Activated CD8-positive, alpha-beta memory T cell treated with anti-CD3 and anti-CD28 coated beads, Interleukin-2, amount 10 ng/mL, durations not matched to agents 7 days and 5 days (primary cell): ENCODE measurements at regions of chr17 and their contacts with region 1.

Region 1: GRCh38 chr17:74961657-74962490 is 10.7 kb downstream of the HID1 start:
- DNase-seq: peak; percentile 87
- ATAC-seq: peak; percentile 82
- H3K4me3 Mint-ChIP-seq: no peak overlapping the region
- H3K27ac Mint-ChIP-seq: no peak overlapping the region
- H3K4me1 Mint-ChIP-seq: peaks cover 7% of the 10 kb centered on the region
- H3K27me3 Mint-ChIP-seq: no peaks in the 10 kb centered on the region

Region 2: DNA sequence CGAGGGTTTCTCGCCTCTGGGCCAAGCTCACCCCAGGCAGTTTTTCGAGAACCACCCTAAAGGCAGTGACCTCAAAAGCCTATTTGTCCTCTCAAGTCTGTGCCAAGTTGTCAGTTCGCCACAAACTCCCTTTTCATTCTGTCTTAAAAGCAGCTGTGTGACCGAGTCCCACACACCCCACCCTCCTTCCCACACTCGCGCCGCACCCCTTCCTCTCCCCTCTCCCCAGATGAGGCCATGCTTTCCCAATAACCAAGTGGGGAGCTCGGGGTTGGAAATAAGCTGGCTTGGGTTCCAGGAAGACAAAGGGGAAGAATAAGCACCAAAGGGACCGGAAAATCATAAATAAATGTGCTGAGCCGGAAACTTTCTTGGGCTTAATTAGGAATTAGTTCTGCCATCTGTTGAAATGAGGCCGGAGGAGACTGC is 138.9 kb before region 1 on chr17:
- CTCF ChIA-PET with region 1: no interaction called
- DNase-seq: no peak
- ATAC-seq: no peak
- H3K4me3 Mint-ChIP-seq: no peak overlapping the region
- H3K27ac Mint-ChIP-seq: no peak overlapping the region
- H3K4me1 Mint-ChIP-seq: no peaks in the 10 kb centered on the region
- H3K27me3 Mint-ChIP-seq: no peaks in the 10 kb centered on the region

Region 3: GRCh38 chr17:74928786-74929185 is 33.1 kb before region 1 on chr17:
- CTCF ChIA-PET with region 1: interaction called, 116 read pairs
- DNase-seq: no peak
- ATAC-seq: no peak
- H3K4me3 Mint-ChIP-seq: no peak overlapping the region
- H3K27ac Mint-ChIP-seq: no peak overlapping the region
- H3K4me1 Mint-ChIP-seq: no peaks in the 10 kb centered on the region
- H3K27me3 Mint-ChIP-seq: peaks cover 76% of the 10 kb centered on the region

Region 4: GRCh38 chr17:74987418-74987908 is 25.6 kb after region 1 on chr17 and contains the start of gene CDR2L:
- CTCF ChIA-PET with region 1: interaction called, 40 read pairs
- DNase-seq: peak; percentile 92
- ATAC-seq: peak; percentile 98
- H3K4me3 Mint-ChIP-seq: peak within 1 kb of the TSS; percentile 70
- H3K27ac Mint-ChIP-seq: no peak within 1 kb of the TSS
- H3K4me1 Mint-ChIP-seq: peaks cover 13% of the 10 kb centered on the region
- H3K27me3 Mint-ChIP-seq: peaks cover 57% of the 10 kb centered on the region
- total RNA-seq, gene CDR2L: 0.32 to 0.47 TPM

Region 5: DNA sequence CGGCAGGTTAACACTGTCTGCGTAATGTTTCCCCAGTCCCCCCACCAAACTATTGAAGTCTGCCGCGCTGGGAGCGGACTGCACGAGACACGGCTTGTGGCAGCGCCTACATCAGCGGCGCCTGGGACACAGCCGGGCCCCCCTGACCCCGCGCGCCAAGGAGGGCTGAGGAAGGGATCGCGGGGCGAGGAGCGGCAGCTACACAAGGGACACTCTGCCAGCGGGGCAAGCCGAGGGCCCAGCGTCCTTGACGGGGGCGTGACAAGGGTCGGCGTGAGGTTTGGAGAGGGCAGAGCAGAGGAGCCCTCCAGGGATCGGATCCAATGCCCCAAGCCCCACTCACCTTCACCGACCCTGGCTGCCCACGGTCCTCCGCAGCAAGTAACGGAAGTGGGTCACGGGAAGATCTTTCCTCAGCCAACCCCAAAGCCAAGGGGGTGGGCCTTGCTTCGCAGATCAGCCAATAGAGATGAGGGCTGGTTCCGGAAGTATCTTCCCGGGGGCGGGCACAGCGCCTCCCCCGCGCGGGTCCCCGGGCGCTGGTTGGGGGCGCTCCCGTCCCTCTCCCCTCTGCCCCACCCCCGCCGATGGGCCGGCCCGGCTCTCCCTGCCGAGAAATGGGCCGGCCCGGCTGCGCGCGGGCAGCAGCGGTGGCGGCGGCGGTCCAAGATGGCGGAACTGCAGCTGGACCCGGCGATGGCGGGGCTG is 84.9 kb after region 1 on chr17 and contains the starts of genes ATP5PD and KCTD2:
- CTCF ChIA-PET with region 1: interaction called, 13 read pairs
- DNase-seq: peak; percentile 97
- ATAC-seq: peak; percentile 95
- H3K4me3 Mint-ChIP-seq: peak within 1 kb of the TSS; percentile 98
- H3K27ac Mint-ChIP-seq: peak within 1 kb of the TSS; percentile 92
- H3K4me1 Mint-ChIP-seq: peaks cover 36% of the 10 kb centered on the region
- H3K27me3 Mint-ChIP-seq: no peaks in the 10 kb centered on the region
- total RNA-seq, gene ATP5PD: 188 to 210 TPM
- total RNA-seq, gene KCTD2: 16.8 to 19.1 TPM

Region 6: GRCh38 chr17:75131280-75132017 is 169.6 kb after region 1 on chr17 and contains the start of gene NT5C:
- CTCF ChIA-PET with region 1: interaction called, 20 read pairs
- DNase-seq: peak; percentile 86
- ATAC-seq: peak; percentile 87
- H3K4me3 Mint-ChIP-seq: peak within 1 kb of the TSS; percentile 81
- H3K27ac Mint-ChIP-seq: peak within 1 kb of the TSS; percentile 89
- H3K4me1 Mint-ChIP-seq: peaks cover 28% of the 10 kb centered on the region
- H3K27me3 Mint-ChIP-seq: no peaks in the 10 kb centered on the region
- total RNA-seq, gene NT5C: 65.2 to 73.1 TPM

Region 7: DNA sequence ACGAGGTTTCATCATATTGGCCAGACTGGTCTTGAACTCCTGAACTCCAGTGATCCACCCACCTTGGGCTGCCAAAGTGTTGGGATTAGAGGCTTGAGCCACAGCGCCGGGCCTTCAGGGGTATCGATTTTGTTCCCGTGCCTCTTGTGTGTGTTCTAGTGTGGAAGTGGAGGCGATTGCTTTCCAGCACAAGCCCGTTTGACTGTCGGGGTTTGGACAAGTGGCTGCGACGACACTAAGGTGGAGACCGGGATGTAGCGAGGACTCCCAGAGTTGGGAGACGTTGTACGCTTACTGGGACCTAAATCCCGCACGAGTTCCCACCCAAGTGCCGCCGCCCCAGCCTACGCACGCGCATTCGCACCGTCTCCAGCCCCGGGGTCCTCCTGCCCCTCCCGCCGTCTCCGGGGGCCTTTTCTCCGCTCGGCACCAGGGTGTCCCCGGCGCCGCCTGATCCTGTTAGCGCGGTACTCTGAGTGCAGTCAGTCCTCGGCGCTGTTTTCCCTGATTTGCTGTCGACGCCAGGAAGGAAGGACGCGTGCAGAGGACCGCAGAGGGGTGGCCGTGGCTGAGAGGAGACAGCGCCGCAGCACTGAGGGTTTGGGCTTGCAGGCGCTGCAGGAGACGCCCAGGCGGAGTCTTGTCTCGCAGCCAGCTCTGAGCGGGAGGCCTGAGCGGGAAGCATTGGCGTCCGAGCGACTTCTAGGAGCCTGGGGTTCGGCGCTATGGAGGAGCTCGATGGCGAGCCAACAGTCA is 243.3 kb after region 1 on chr17 and contains the start of gene NUP85:
- CTCF ChIA-PET with region 1: interaction called, 53 read pairs
- DNase-seq: peak; percentile 93
- ATAC-seq: peak; percentile 90
- H3K4me3 Mint-ChIP-seq: peak within 1 kb of the TSS; percentile 95
- H3K27ac Mint-ChIP-seq: peak within 1 kb of the TSS; percentile 96
- H3K4me1 Mint-ChIP-seq: peaks cover 28% of the 10 kb centered on the region
- H3K27me3 Mint-ChIP-seq: no peaks in the 10 kb centered on the region
- total RNA-seq, gene NUP85: 164 to 176 TPM